ENCODE measurements at regions of chr11 and their contacts with region 1.

Region 1: GRCh38 chr11:129930296-129930695 is 34.9 kb upstream of the NFRKB start:
- DNase-seq: no peak
- ATAC-seq: no peak
- H3K4me3 ChIP-seq: no peak overlapping the region
- H3K27ac ChIP-seq: no peak overlapping the region
- H3K4me1 ChIP-seq: no peaks in the 10 kb centered on the region
- H3K27me3 ChIP-seq: no peaks in the 10 kb centered on the region
- CTCF ChIP-seq: no peak
- POLR2A ChIP-seq: no peak

Region 2: GRCh38 chr11:129992161-129992944 is 62.1 kb after region 1 on chr11:
- intact Hi-C with region 1: loop called in 2 of 10 experiments (anchors 10 kb)
- DNase-seq: no peak
- ATAC-seq: peak in 3 of 4 donors; percentile 54 to 72 (median 57)
- H3K4me3 ChIP-seq: no peak overlapping the region
- H3K27ac ChIP-seq: no peak overlapping the region
- H3K4me1 ChIP-seq: peaks cover 0 to 25% (median 12%) of the 10 kb centered on the region in 12 donors
- H3K27me3 ChIP-seq: no peaks in the 10 kb centered on the region
- CTCF ChIP-seq: peak in 7 of 12 donors; percentile 16 to 39 (median 33)
- POLR2A ChIP-seq: no peak